ENCODE measurements at regions of chr21 and their contacts with region 1.

Region 1: GRCh38 chr21:42818328-42818749 is 61.0 kb downstream of the WDR4 start:
- DNase-seq: peak; percentile 75 to 78
- H3K4me3 ChIP-seq: no peak overlapping the region
- H3K27ac ChIP-seq: no peak overlapping the region
- H3K4me1 ChIP-seq: peaks cover 0 to 7% (median 3%) of the 10 kb centered on the region in 4 donors
- H3K27me3 ChIP-seq: peaks cover 0 to 10% (median 0%) of the 10 kb centered on the region in 3 donors
- CTCF ChIP-seq: peak in 5 of 7 experiments; percentile 84 to 92 (median 88)
- EP300 ChIP-seq: no peak
- POLR2A ChIP-seq: no peak

Region 2: GRCh38 chr21:42652527-42653230 is 165.7 kb before region 1 on chr21:
- intact Hi-C with region 1: loop called (anchors 10 kb)
- DNase-seq: peak; percentile 75 to 85
- H3K4me3 ChIP-seq: peak overlapping the region; percentile 61 to 74 (median 72)
- H3K27ac ChIP-seq: peak overlapping the region; percentile 49 to 87 (median 77)
- H3K4me1 ChIP-seq: peaks cover 27 to 57% (median 39%) of the 10 kb centered on the region in 4 donors
- H3K27me3 ChIP-seq: peaks cover 0 to 74% (median 19%) of the 10 kb centered on the region in 3 donors
- CTCF ChIP-seq: peak in 5 of 7 experiments; percentile 37 to 78 (median 50)
- EP300 ChIP-seq: no peak
- POLR2A ChIP-seq: no peak

Region 3: DNA sequence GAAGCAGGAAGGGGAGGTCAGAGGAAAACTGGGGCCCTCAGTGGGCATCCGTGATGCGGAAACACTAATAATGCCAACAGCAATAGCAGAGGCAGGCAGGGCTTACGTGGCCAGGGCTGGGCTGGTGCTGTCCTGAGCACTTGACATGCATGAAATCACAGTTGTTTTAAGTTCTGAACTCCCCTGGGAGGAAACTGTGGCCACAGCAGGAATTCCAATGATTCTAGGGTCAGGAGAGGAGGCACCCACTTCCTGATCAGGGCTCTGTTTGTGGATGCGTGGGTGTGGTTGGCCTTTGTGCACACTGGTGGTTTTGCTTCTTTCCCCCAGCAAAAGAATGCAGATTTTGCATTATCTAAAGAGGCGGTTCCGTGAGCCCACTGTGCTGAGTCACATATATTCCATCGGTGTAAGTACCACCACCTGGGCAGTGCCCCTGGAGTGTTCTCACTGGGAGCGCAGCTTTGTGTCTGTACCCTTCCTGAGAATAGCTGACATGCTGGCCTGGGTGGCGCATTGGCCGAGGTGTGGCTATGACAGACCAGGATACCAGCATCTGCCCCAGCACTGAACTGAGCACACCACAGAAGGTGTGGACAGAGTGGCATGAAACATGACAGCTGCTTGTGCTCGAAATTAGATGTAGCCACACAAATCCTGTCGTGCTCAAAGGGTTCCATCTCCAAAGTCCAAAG is 94.0 kb before region 1 on chr21:
- intact Hi-C with region 1: no loop called
- DNase-seq: peak in 1 of 2 donors; percentile 65
- H3K4me3 ChIP-seq: no peak overlapping the region
- H3K27ac ChIP-seq: peak overlapping the region in 3 of 5 donors; percentile 1 to 40 (median 3)
- H3K4me1 ChIP-seq: peaks cover 12 to 36% (median 18%) of the 10 kb centered on the region in 4 donors
- H3K27me3 ChIP-seq: no peaks in the 10 kb centered on the region
- CTCF ChIP-seq: no peak
- EP300 ChIP-seq: no peak
- POLR2A ChIP-seq: no peak

Region 4: DNA sequence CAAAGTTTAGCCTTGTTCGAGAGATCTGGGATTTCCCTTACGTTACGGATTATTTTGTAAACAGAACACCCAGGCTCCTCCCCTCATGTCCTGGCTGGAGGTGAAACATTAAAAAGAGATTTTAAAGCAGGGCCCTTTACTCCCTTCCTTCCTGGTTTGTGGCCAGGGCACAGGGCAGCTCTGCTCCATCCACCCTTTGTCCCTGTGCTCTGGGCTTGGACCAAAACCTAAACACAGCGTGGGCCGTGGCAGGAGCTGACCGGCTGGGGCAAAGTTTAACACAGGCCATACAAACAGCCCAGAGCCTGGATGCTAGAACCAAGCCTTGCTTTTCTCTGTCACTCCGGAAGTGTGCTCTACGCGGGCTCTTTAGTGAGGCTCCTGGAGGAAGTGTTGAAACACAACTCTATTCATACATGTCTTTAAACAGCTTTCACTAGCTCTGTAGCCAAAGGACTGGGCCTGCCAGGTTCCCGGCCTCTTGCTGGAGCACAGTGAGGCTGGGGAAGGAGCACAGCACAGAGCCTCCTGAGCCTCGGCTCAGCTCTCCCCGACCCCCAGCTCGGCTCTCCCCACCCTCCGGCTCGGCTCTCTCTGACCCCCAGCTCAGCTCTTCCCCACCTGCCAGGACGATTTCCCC is 80.3 kb before region 1 on chr21:
- intact Hi-C with region 1: no loop called
- DNase-seq: peak; percentile 72 to 79
- H3K4me3 ChIP-seq: no peak overlapping the region
- H3K27ac ChIP-seq: peak overlapping the region; percentile 57 to 86 (median 78)
- H3K4me1 ChIP-seq: peaks cover 18 to 46% (median 42%) of the 10 kb centered on the region in 4 donors
- H3K27me3 ChIP-seq: no peaks in the 10 kb centered on the region
- CTCF ChIP-seq: no peak
- EP300 ChIP-seq: no peak
- POLR2A ChIP-seq: no peak

Region 5: GRCh38 chr21:42887326-42887725 is 69.0 kb after region 1 on chr21:
- intact Hi-C with region 1: no loop called
- DNase-seq: no peak
- H3K4me3 ChIP-seq: no peak overlapping the region
- H3K27ac ChIP-seq: no peak overlapping the region
- H3K4me1 ChIP-seq: peaks cover 2 to 6% (median 4%) of the 10 kb centered on the region in 4 donors
- H3K27me3 ChIP-seq: no peaks in the 10 kb centered on the region
- CTCF ChIP-seq: no peak
- EP300 ChIP-seq: no peak
- POLR2A ChIP-seq: no peak

Region 6: DNA sequence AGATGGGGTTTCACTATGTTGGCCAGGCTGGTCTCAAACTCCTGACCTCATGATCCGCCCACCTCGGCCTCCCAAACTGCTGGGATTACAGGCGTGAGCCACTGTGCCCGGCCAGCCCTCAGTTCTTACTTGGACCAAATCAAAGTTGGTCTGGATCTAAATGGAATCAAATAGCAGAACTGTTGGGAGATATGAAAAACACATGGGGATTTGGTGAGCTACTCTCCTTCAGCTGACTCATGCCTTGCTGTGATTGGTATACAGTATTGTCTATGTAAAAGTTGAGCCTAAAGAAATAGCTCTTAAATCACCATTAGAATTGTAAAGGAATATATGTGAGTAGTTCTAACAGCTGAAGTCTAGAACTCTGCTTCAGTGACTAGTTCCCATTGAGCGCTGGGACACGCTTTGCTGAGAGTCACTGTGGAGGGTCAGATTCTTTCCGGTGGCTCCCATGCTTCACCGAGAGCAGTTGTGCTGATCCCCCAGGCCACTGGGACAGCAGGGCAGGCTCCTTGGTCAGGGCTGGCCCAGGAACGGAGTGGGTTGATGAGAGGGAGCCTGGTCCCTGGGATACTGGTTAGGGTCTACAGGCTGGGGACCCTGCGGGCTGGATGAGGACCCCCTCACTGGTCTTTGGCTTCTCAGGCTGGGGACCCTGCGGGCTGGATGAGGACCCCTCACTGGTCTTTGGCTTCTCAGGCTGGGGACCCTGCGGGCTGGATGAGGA is 170.1 kb after region 1 on chr21:
- intact Hi-C with region 1: no loop called
- DNase-seq: no peak
- H3K4me3 ChIP-seq: no peak overlapping the region
- H3K27ac ChIP-seq: no peak overlapping the region
- H3K4me1 ChIP-seq: peaks cover 0 to 24% (median 13%) of the 10 kb centered on the region in 4 donors
- H3K27me3 ChIP-seq: no peaks in the 10 kb centered on the region
- CTCF ChIP-seq: no peak
- EP300 ChIP-seq: no peak
- POLR2A ChIP-seq: no peak

Measured in stomach (tissue), 19 donors.